Heart left ventricle (tissue), 16 donors: ENCODE measurements at regions of chr3 and their contacts with region 1.

Region 1: DNA sequence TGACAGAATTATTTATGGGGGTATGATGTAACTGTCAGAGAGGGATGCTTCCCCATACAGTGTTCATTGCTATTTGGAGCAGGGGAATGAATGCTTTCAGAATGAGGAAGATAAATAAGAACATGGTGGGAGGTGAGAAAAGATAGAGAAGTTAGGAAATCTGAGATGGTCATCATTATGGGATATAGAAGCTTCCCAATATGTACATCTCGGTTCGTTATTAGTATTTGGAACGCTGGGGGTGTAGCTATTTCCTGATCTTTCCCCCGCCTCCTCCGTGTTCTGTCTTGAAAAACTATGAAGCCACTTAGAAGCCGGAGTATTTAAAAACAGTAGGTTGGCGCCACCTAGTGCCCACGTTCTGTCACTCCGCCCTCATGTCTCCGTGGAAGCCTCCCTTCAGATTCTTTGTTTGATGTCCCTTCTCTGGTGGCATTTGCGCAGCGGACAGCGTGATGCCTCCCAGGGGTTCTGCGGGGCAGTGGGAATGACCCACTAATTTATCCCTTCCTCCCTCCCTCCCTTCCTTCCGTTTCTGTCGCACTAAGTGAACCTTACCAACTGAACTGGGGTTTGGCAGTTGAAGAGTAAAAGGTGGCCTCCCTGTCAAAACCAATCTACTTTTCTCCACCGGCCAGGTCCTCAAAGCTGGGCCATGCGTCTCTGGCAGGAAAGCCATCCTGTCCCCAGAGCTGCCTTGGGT is 184.5 kb downstream of the FEZF2 start:
- DNase-seq: peak; percentile 66 to 79 (median 71)
- ATAC-seq: peak; percentile 45 to 74 (median 66)
- H3K4me3 ChIP-seq: peak overlapping the region in 1 of 12 donors; percentile 24
- H3K27ac ChIP-seq: peak overlapping the region in 1 of 12 donors; percentile 9
- H3K4me1 ChIP-seq: peaks cover 0 to 30% (median 16%) of the 10 kb centered on the region in 12 donors
- H3K27me3 ChIP-seq: no peaks in the 10 kb centered on the region
- CTCF ChIP-seq: peak; percentile 76 to 89 (median 84)
- POLR2A ChIP-seq: no peak

Region 2: DNA sequence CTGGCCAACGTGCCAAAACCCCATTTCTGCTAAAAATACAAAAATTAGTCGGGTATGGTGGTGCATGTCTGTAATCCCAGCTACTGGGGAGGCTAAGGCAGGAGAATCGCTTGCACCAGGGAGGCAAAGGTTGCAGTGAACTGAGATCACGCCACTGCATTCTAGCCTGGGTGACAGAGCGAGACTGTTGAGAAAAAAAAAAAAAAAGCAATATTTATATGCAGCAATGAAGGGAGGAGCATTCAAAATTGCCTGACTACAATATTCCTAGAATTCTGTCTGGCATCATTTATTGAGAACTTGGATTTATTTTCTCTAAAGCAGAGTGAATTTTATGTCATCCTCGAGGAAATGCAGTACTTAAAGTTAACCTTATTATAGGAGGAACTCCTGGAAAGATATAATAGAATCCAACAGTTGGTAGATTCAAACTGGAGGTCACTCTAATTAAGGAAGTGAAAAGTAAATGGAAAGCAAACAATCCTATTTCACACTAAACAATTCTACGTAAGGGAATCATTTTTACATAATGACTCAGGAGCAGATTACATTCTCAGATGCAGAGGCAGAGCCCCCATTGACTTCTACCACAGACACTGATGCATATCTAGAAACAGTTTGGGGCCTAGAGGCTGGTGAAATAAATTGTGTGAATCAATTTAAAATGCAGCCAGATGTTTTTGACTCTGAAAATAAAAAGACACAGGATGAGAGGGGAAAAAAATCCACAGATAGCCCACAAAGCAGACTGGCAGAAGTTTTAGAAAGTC is 855.5 kb before region 1 on chr3:
- intact Hi-C with region 1: no loop called
- DNase-seq: no peak
- ATAC-seq: no peak
- H3K4me3 ChIP-seq: no peak overlapping the region
- H3K27ac ChIP-seq: no peak overlapping the region
- H3K4me1 ChIP-seq: no peaks in the 10 kb centered on the region
- H3K27me3 ChIP-seq: no peaks in the 10 kb centered on the region
- CTCF ChIP-seq: no peak
- POLR2A ChIP-seq: no peak

Region 3: GRCh38 chr3:61448378-61448777 is 740.5 kb before region 1 on chr3:
- intact Hi-C with region 1: loop called in 1 of 10 experiments (anchors 10 kb)
- DNase-seq: peak in 1 of 5 donors; percentile 33
- ATAC-seq: peak; percentile 78 to 91 (median 85)
- H3K4me3 ChIP-seq: no peak overlapping the region
- H3K27ac ChIP-seq: peak overlapping the region in 7 of 12 donors; percentile 12 to 57 (median 28)
- H3K4me1 ChIP-seq: peaks cover 0 to 19% (median 6%) of the 10 kb centered on the region in 12 donors
- H3K27me3 ChIP-seq: no peaks in the 10 kb centered on the region
- CTCF ChIP-seq: no peak
- POLR2A ChIP-seq: no peak

Region 4: GRCh38 chr3:61864886-61865285 is 323.9 kb before region 1 on chr3:
- intact Hi-C with region 1: loop called in 2 of 10 experiments (anchors 5 kb)
- DNase-seq: no peak
- ATAC-seq: no peak
- H3K4me3 ChIP-seq: no peak overlapping the region
- H3K27ac ChIP-seq: no peak overlapping the region
- H3K4me1 ChIP-seq: peaks cover 0 to 64% (median 28%) of the 10 kb centered on the region in 12 donors
- H3K27me3 ChIP-seq: no peaks in the 10 kb centered on the region
- CTCF ChIP-seq: no peak
- POLR2A ChIP-seq: no peak

Region 5: DNA sequence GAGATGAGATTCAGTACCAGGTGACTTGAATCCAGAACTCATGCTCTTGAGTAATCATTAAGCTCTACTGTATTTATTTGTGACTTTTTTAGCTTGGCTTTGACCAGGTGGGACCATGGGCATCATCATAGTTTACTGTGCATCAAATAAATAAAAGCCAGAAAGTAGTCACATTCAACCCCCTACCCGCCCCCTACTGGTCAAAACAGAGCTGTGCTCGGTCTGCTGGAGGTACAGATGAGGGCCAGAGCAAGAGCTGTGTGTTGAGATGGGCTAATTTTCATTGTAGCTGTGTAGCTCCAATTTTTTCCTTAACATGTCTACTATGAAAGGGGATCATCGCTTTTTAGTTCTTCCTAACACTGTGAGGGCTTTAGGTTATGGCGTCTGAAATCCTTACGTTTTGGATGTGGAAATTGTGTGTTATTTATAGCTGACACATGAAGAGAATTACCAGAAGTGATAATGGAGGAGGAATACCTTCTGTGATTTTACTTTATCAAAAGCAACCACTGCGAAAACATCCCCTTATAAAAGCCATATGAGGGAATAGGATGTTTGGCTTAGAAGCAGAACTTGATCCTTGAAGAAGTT is 252.4 kb before region 1 on chr3:
- intact Hi-C with region 1: loop called in 2 of 10 experiments (anchors 5 to 10 kb)
- DNase-seq: peak in 1 of 5 donors; percentile 33
- ATAC-seq: peak in 2 of 4 donors; percentile 7 to 13
- H3K4me3 ChIP-seq: no peak overlapping the region
- H3K27ac ChIP-seq: no peak overlapping the region
- H3K4me1 ChIP-seq: peaks cover 0 to 30% (median 9%) of the 10 kb centered on the region in 12 donors
- H3K27me3 ChIP-seq: no peaks in the 10 kb centered on the region
- CTCF ChIP-seq: peak; percentile 17 to 55 (median 38)
- POLR2A ChIP-seq: no peak

Region 6: DNA sequence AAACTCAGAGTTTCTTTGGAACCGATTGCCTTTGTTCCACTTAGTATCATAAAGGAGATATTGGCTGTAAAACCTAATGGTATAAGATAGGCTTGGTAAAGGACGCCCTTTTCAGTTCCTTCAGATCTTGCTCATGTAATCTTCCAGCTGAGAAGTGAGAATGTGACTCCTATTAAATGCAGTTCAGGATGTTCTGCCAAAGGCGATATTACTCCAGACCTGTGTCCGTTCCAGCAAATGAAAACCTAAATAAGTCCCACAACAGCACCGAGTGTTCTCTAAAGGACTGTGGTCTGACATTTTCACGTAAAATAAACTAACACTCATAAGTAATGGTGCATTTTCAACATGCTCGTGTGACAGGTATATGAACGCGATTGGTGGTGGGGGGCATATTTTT is 91.7 kb before region 1 on chr3:
- intact Hi-C with region 1: loop called in 1 of 10 experiments (anchors 10 kb)
- DNase-seq: no peak
- ATAC-seq: peak; percentile 85 to 89 (median 88)
- H3K4me3 ChIP-seq: peak overlapping the region in 1 of 12 donors; percentile 5
- H3K27ac ChIP-seq: peak overlapping the region; percentile 63 to 85 (median 75)
- H3K4me1 ChIP-seq: peaks cover 2 to 57% (median 27%) of the 10 kb centered on the region in 12 donors
- H3K27me3 ChIP-seq: no peaks in the 10 kb centered on the region
- CTCF ChIP-seq: no peak
- POLR2A ChIP-seq: no peak

Region 7: DNA sequence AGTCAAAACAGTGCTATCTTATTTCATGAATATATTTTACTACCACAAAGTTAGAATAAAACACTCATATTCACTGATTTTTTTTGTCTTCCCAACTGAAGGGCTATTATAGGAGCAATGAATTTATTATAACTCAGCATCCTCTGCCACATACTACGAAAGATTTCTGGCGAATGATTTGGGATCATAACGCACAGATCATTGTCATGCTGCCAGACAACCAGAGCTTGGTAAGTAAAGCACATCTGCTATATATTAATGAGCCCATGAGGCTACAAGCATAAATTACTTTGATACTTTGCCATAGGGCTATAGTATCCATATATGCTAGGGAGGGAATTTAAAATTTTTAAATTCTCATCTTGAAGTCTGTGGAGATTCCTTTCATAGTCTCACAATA is 88.6 kb after region 1 on chr3:
- intact Hi-C with region 1: no loop called
- DNase-seq: no peak
- ATAC-seq: no peak
- H3K4me3 ChIP-seq: no peak overlapping the region
- H3K27ac ChIP-seq: no peak overlapping the region
- H3K4me1 ChIP-seq: no peaks in the 10 kb centered on the region
- H3K27me3 ChIP-seq: no peaks in the 10 kb centered on the region
- CTCF ChIP-seq: no peak
- POLR2A ChIP-seq: no peak